ENCODE measurements at regions of chr4 and their contacts with region 1.

Region 1: DNA sequence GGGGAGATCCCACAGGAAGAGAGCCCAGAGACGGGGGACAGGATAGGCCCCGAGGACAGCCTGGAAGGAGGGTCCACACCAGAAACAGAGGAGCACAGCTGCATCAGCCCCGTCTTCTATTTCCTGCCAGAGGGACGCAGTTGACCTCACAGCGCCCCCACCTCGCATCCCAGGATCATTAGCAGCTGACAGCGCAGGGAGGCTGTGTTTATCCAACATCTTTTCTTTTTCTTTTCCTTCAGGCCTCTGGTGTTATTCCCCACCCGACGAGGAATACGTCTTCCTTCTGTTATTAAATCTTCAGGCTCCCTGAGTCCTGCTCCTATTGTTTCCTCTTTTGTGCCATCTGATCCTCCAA is 75.4 kb downstream of the DCHS2 start:
- DNase-seq: no peak
- H3K4me3 ChIP-seq: peak overlapping the region; percentile 46 to 56 (median 48)
- H3K27ac ChIP-seq: no peak overlapping the region
- H3K4me1 ChIP-seq: peaks cover 8% of the 10 kb centered on the region
- H3K27me3 ChIP-seq: no peaks in the 10 kb centered on the region
- CTCF ChIP-seq: peak in 1 of 2 donors; percentile 29

Region 2: DNA sequence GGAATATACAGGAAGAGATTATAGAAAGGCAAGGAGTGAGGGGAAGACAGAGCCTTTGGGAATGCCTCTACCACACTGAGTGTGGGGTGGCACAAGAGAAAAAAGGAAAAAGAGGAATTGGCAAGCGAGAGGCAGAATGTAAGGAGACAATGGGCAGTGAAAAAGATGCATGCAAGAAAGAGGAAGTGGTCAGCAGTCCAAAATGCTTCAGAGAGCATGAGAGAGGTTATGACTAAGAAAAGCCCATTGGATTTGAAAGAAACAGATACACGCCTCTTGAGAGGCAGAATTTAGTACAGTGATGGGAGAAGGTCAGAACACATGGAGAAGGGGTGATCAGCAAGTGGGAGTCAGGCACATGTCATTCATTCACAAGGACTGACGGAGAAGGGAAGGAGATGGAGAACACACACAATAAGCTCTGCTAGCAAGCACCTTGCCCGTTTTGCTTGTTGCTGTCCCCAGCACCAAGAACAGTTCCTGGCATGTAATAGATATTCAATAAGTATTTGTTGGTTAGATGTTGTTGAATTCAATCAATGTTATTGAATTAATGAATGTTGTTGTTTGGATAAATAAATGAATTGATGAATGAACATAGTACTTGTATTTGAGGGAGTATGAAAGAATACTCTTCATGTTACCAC is 69.1 kb after region 1 on chr4:
- CTCF ChIA-PET with region 1: no interaction called
- dilution Hi-C with region 1: loop called (anchors 10 kb)
- in situ Hi-C with region 1: no loop called
- intact Hi-C with region 1: no loop called
- DNase-seq: no peak
- H3K4me3 ChIP-seq: no peak overlapping the region
- H3K27ac ChIP-seq: no peak overlapping the region
- H3K4me1 ChIP-seq: no peaks in the 10 kb centered on the region
- H3K27me3 ChIP-seq: peaks cover 8% of the 10 kb centered on the region
- CTCF ChIP-seq: no peak

Measured in mammary epithelial cell (primary cell).